PC-9 (cell line): ENCODE measurements at regions of chr2 and their contacts with region 1.

Region 1: GRCh38 chr2:222860740-222861410 is at the start of gene ACSL3:
- DNase-seq: peak; percentile 94 to 100
- H3K4me3 ChIP-seq: peak within 1 kb of the TSS; percentile 83
- H3K27ac ChIP-seq: peak within 1 kb of the TSS; percentile 90
- H3K4me1 ChIP-seq: peaks cover 66% of the 10 kb centered on the region
- H3K27me3 ChIP-seq: no peaks in the 10 kb centered on the region
- CTCF ChIP-seq: no peak; the same call in 1 of the 2 replicates
- total RNA-seq, gene ACSL3: 300 and 446 TPM in 2 replicates

Region 2: DNA sequence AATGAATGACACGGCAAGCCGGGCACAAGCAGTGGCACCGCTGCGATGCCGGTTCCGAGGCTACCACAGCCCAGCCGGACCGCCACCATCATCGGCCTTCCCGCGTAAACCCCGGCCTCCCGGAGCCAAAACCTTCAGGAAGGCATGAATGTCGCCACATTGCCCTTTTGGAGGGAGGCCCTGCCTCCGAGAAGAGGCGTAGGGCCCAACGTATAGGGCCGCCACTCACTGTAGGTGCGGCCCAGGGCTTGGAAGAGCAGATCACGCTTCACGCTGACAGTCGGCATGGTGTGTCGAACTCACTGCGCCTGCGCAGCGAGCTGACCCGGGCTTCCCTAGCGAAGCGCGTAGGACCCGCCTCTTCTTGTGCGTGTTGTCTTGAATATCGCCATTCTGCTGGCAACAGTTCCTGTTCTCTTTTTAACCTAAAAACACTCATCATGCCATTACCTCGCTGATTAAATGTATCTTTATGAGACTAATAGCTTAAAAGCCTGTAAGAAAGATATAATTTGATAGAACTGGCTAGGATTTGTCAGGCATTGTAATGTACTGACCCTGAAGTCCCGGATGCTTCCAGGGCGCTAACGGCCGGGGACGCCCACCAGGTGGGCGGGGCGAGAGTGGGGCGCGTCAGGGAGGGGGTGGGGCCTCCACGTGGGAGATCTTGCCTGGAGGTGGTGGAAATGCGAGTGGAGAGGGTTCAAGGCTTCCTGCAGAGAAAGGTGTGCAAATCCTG is 204.9 kb before region 1 on chr2 and contains the start of gene FARSB:
- CTCF ChIA-PET with region 1: no interaction called
- POLR2A ChIA-PET with region 1: interaction called, 13 read pairs
- intact Hi-C with region 1: no loop called
- DNase-seq: peak; percentile 97 to 98
- H3K4me3 ChIP-seq: peak within 1 kb of the TSS; percentile 78
- H3K27ac ChIP-seq: peak within 1 kb of the TSS; percentile 45
- H3K4me1 ChIP-seq: peaks cover 27% of the 10 kb centered on the region
- H3K27me3 ChIP-seq: no peaks in the 10 kb centered on the region
- CTCF ChIP-seq: no peak
- total RNA-seq, gene FARSB: 37.5 and 50.2 TPM in 2 replicates

Region 3: GRCh38 chr2:222792001-222792611 is 68.8 kb before region 1 on chr2:
- CTCF ChIA-PET with region 1: interaction called, 15 read pairs
- POLR2A ChIA-PET with region 1: interaction called, 15 read pairs
- intact Hi-C with region 1: loop called (anchors 1 kb)
- DNase-seq: no peak
- H3K4me3 ChIP-seq: no peak overlapping the region
- H3K27ac ChIP-seq: no peak overlapping the region
- H3K4me1 ChIP-seq: peaks cover 29% of the 10 kb centered on the region
- H3K27me3 ChIP-seq: no peaks in the 10 kb centered on the region
- CTCF ChIP-seq: no peak

Region 4: GRCh38 chr2:222805541-222806304 is 55.2 kb before region 1 on chr2:
- CTCF ChIA-PET with region 1: no interaction called
- POLR2A ChIA-PET with region 1: interaction called, 3 read pairs
- intact Hi-C with region 1: loop called (anchors 2 kb)
- DNase-seq: peak in 1 of 2 experiments; percentile 96
- H3K4me3 ChIP-seq: peak overlapping the region; percentile 19; the same call in 1 of the 2 replicates
- H3K27ac ChIP-seq: peak overlapping the region; percentile 79
- H3K4me1 ChIP-seq: peaks cover 30% of the 10 kb centered on the region
- H3K27me3 ChIP-seq: no peaks in the 10 kb centered on the region
- CTCF ChIP-seq: no peak

Region 5: DNA sequence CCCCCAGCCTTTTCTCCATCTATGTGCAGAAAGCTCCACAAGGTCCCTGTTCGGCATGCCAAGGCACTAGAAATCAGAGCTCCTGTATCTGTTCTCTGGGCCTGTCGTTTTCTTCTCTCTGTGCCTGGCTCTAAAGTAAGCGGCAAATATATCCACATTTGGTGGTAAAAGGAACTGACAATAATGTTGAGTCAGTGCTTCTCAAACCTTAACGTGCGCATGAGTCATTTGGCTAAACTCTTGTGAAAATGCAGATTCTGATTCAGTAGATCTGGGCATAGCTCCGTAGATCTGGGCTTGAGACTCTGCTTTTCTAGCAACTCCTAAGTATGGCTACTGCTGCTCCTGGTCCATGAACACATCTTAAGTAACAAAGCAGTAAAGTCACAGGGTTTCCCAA is 16.6 kb before region 1 on chr2:
- CTCF ChIA-PET with region 1: interaction called, 5 read pairs
- POLR2A ChIA-PET with region 1: interaction called, 19 read pairs
- intact Hi-C with region 1: loop called (anchors 1 kb)
- DNase-seq: peak in 1 of 2 experiments; percentile 79
- H3K4me3 ChIP-seq: peak overlapping the region; percentile 6; the same call in 1 of the 2 replicates
- H3K27ac ChIP-seq: peak overlapping the region; percentile 64
- H3K4me1 ChIP-seq: peaks cover 88% of the 10 kb centered on the region
- H3K27me3 ChIP-seq: no peaks in the 10 kb centered on the region
- CTCF ChIP-seq: no peak

Region 6: DNA sequence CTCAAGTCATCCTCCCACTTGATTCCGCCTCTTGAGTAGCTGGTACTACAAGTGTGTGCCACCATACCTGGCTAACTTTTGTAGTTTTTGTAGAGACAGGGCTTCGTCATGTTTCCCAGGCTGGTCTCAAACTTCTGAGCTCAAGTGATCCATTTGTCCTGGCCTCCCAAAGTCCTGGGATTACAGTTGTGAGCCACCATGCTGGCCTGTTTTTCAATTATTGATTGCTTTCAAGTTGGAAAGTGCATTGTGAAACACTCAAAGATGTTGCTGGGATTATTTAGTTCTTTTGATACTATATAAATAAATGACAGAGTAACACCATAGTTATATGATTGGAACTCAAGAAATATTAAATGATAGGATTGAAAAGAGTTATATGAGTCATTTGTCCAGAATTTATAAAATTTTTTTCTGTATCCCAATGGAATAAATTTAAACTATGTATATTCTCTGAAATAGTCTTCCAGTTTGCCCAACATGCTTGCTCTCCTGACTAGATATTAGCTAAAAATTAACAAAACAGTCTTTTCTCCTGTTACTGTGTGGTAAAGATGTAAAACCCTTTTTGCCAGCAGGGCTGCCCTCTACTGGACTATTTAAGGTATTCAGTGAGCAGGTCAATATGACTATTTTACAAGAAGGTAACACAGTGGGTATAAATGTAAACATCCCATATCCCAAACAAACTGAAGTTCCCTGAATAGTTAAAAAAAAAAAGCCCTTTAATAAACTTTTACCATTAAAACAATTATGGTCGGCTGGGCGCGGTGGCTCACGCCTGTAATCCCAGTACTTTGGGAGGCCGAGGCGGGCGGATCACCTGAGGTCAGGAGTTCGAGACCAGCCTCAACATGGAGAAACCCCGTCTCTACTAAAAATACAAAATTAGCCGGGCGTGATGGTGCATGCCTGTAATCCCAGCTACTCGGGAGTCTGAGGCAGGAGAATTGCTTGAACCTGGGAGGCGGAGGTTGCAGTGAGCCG is 42.7 kb after region 1 on chr2:
- CTCF ChIA-PET with region 1: interaction called, 12 read pairs
- POLR2A ChIA-PET with region 1: interaction called, 3 read pairs
- intact Hi-C with region 1: loop called (anchors 1 kb)
- DNase-seq: peak; percentile 48 to 68
- H3K4me3 ChIP-seq: no peak overlapping the region
- H3K27ac ChIP-seq: 0 out of 2 replicates have a peak overlapping the region, but pooled peaks have one; percentile 7
- H3K4me1 ChIP-seq: peaks cover 29% of the 10 kb centered on the region
- H3K27me3 ChIP-seq: no peaks in the 10 kb centered on the region
- CTCF ChIP-seq: peak; percentile 99